Right ventricle myocardium superior (tissue), 1 donor: ENCODE measurements at regions of chr5 and their contacts with region 1.

Region 1: DNA sequence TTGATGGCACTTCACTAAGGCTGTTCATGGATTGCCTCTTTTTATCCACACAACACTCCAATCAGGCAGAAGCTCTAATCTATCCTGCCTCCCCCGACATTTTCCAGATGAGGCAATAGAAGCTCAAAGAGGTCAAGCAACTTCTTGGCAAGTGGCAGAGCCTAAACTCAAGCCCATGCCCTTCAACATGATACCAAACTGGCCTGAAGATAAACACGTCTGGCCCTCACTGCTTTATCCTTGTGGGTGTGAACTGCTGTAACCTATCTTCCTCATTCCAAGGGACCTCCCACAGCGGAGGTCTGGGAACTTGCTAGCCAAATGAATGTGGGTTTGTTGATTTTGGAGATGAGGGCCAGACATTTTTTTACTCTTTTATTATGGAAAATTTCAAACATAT is 9.5 kb downstream of the SLC35A4 start:
- DNase-seq: no peak
- ATAC-seq: no peak

Region 2: GRCh38 chr5:140131967-140132409 is 442.2 kb before region 1 on chr5:
- intact Hi-C with region 1: no loop called
- DNase-seq: no peak
- ATAC-seq: peak; percentile 68

Region 3: GRCh38 chr5:140632150-140633020 is 58.2 kb after region 1 on chr5:
- intact Hi-C with region 1: loop called (anchors 5 kb)
- DNase-seq: peak; percentile 76
- ATAC-seq: peak; percentile 69